ENCODE measurements at regions of chrX and their contacts with region 1.

Region 1: DNA sequence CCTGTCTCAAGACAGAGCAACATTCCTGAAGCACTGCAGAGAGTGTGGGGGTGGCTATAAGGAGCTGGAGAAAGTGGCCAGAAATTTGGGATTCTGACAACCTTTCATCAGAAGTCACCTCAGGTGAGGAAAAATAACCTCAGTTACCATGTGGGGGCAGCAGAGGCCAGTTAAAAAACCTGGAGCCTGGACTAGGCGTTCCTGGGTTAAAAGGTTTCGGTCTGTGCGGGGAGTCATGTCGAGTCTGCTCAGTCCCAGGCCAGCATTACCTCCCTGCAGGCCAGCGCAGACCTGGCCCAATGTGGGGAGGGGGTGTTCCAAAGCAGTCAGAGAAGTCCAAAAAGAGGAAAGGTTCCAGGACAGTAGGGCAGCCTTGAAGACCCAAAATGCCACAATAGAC is 10.9 kb upstream of the NALF2 start:
- DNase-seq: peak; percentile 30 to 35
- ATAC-seq: peak; percentile 80 to 92
- H3K4me3 ChIP-seq: no peak overlapping the region
- H3K27ac ChIP-seq: no peak overlapping the region
- H3K4me1 ChIP-seq: peaks cover 5% of the 10 kb centered on the region; the same call in 1 of the 3 replicates
- CTCF ChIP-seq: peak; percentile 54
- EP300 ChIP-seq: no peak
- POLR2A ChIP-seq: no peak
- RAD21 ChIP-seq: peak; percentile 67 to 70

Region 2: DNA sequence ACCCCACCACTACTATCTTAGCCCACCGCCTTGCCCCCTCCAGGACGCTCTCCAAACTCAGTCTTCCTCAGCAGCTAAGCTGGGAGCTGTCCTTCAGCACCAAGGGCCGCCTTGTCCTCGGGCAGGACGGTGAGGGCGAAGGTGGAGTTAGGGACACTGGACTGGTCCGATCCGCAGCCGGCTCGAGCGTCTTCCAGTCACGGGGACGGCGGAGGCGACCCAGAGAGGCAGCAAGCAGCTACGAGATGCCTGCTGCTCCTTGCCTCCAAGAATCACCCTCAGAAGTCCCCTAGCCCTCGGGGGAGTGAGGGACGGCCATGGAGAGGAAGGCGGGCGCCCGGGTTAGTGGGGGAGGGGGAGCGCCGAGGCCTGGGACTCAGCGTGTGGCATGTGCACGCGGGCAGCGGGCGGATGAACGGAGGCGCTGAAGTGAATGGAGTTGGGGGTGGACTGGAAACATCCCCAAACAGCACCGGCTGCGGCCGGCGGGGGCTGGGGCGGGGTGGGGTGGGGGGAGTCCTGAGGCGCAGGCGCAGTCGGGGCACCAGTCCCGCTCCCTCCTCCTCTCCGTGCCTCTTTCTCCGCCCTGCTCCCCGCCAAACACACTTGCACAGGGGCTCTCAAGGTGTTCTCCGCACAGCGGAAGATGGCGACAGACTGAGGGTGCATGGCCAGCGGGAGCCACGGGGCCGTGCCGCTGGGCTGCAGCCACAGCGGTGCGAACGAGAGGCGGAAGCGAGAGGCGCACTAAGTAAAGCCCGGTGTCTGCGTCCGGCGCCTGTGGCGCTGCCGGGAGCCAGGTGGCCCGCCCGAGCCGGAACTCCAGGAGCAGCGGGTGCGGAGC is 10.8 kb after region 1 on chrX and contains the start of gene NALF2:
- CTCF ChIA-PET with region 1: interaction called, 18 read pairs
- POLR2A ChIA-PET with region 1: no interaction called
- DNase-seq: peak; percentile 41 to 76
- ATAC-seq: peak; percentile 86 to 89
- H3K4me3 ChIP-seq: peak within 1 kb of the TSS; percentile 81
- H3K27ac ChIP-seq: peak within 1 kb of the TSS; percentile 67 to 91
- H3K4me1 ChIP-seq: no peaks in the 10 kb centered on the region
- CTCF ChIP-seq: 0 out of 3 replicates have a peak, but pooled peaks have one; percentile 17
- EP300 ChIP-seq: no peak
- POLR2A ChIP-seq: peak; percentile 76
- RAD21 ChIP-seq: no peak
- polyA plus RNA-seq, gene NALF2: 1.4 and 1.9 TPM in 2 replicates

Region 3: DNA sequence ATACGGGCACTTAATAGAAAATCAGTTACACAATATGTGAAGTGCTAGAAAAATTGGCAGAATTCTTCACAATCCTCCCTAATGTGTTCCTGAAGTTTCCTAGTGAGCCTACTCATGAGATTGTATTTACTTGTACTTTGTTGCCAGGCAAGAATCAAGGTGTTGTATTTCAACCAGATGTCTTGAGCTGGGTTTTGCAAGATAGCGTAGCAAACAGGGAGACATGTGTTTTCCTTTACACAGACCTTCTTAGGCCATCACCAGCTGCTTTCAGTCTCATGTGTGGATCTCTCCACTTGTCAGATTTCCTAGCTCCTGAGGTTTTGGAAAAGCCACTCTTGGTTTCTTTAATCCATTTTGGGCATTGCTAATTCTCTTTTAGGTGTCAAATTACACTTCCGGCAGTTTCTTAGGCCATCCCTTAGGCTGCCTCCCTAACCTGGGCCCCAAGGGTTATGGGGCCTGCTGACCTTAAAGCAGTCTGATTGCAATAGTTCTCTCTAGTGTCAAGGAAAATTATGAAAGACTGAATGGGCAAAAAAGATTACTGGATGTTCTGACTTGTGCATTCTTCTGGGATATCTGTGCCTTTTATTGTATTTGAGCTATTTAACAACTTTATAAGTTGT is 110.5 kb after region 1 on chrX:
- CTCF ChIA-PET with region 1: no interaction called
- POLR2A ChIA-PET with region 1: no interaction called
- DNase-seq: no peak
- ATAC-seq: no peak
- H3K4me3 ChIP-seq: no peak overlapping the region
- H3K27ac ChIP-seq: no peak overlapping the region
- H3K4me1 ChIP-seq: no peaks in the 10 kb centered on the region
- CTCF ChIP-seq: no peak
- EP300 ChIP-seq: no peak
- POLR2A ChIP-seq: no peak
- RAD21 ChIP-seq: no peak